Activated T-helper 2 cell treated with anti-CD3 and anti-CD28 coated beads, Interferon-gamma antibody, Interleukin-2, Interleukin-4, amounts not matched to agents 10 μg/mL and 5 μg/mL and 100 μg/mL, durations not matched to agents 14 hours and 24 hours and 36 hours (primary cell): ENCODE measurements at regions of chr5 and their contacts with region 1.

Region 1: GRCh38 chr5:94740286-94740685 is 121.8 kb downstream of the SLF1 start:
- DNase-seq: no peak
- H3K4me3 Mint-ChIP-seq: no peak overlapping the region
- H3K27ac Mint-ChIP-seq: no peak overlapping the region
- H3K4me1 Mint-ChIP-seq: no peaks in the 10 kb centered on the region
- H3K27me3 Mint-ChIP-seq: peaks cover 3% of the 10 kb centered on the region

Region 2: GRCh38 chr5:94508461-94509148 is 231.7 kb before region 1 on chr5:
- intact Hi-C with region 1: no loop called
- DNase-seq: no peak
- H3K4me3 Mint-ChIP-seq: no peak overlapping the region
- H3K27ac Mint-ChIP-seq: no peak overlapping the region
- H3K4me1 Mint-ChIP-seq: no peaks in the 10 kb centered on the region
- H3K27me3 Mint-ChIP-seq: peaks cover 3% of the 10 kb centered on the region

Region 3: DNA sequence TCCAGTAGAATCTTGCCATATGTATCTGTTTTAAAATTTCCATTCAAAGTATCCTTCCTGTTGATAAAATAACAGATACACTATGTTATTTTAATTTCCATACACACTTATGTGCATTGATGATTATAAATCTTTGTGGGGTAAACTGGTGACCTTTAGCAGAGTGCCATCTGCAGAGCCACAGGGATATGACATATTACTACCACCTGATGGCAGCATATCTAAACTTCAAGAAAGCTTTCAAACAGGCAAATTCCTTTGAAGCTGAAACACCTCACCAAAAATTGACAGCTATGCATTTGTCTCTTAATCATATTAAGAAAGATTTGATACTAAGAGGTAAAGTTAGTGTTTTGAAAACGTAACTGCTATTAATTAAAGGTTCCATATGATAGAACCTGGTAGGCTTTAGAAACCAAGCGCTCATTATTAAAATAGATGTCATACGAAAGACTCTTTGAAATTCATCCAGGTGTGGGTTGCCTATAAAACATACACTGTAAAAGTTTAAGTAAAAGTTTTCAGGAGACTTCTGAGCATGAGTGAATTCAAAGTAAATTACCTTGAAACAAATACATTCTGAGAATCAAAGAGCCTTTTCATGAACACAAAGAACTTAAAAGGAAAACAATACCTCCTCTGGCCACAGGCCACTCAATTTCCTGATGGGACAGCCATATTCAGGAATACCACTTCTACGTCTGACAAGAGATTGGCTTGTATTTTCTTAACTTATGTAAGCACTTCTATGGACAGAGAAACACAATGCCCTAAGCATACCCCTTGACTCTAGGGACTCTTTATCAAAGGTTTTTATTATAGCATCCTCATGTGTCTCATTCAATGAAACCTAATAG is 215.2 kb before region 1 on chr5:
- intact Hi-C with region 1: loop called (anchors 1 kb)
- DNase-seq: no peak
- H3K4me3 Mint-ChIP-seq: no peak overlapping the region
- H3K27ac Mint-ChIP-seq: no peak overlapping the region
- H3K4me1 Mint-ChIP-seq: no peaks in the 10 kb centered on the region
- H3K27me3 Mint-ChIP-seq: no peaks in the 10 kb centered on the region

Region 4: DNA sequence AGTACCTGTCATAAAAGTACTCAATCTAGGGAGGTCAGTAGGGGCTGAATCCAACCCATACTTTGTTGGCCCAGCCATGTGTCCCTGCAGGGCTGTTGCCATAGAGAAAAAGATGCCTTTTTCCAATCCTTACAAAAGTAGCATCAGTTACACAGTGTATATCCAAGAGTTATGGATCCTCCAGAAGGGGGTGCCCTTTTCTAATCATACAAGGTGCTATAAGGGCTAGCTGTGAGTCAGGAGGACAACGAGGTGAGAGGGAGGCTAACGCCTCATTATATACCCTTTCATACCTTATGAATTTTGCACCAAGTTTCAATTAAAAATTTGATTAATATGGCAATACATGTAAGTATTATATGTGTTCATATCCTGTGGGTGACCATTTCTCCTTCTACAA is 126.7 kb before region 1 on chr5:
- intact Hi-C with region 1: loop called (anchors 1 kb)
- DNase-seq: no peak
- H3K4me3 Mint-ChIP-seq: no peak overlapping the region
- H3K27ac Mint-ChIP-seq: no peak overlapping the region
- H3K4me1 Mint-ChIP-seq: peaks cover 16% of the 10 kb centered on the region
- H3K27me3 Mint-ChIP-seq: no peaks in the 10 kb centered on the region

Region 5: DNA sequence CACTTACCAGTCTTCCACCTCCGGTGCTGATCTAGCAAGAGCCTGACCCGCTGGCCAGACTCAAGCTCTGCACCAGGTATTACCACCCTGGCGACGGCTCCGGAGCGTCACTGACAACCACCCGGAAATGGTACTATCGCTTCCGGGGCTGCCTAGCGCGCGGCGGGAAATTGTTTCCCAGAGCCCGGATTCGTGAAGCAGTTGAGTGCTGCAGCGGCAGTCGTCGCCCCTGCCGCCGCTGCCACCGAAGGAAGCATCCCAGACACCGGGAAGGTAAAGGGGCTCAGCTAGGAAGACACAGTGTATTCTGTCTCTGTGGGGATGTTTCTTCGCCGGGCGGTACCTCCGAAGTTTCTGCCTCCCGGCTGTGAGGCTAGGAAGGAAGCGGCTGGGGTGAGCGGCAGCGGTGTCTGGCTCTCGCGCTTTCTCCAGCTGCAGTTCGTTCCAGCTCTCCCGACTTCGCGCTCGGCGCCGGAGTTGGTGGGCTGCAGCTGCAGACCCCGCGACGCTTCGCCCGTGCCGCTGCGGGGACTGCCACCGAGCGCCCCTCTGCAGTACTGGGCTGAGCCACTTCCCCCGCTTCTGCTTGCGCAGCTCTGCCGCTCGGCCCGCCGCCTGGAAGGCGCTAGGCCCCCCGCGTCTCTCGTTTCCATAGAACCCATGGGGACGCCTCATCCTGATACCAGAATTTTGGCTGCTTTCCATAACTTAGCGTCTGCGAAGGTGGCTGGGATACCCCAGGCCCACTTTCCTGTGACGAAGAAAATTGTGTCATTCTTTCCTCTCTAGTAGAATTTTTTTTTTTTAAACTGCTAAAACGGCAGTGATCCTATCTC is 121.6 kb before region 1 on chr5 and contains the starts of genes KIAA0825 and SLF1:
- intact Hi-C with region 1: loop called (anchors 1 kb)
- DNase-seq: peak; percentile 83
- H3K4me3 Mint-ChIP-seq: peak within 1 kb of the TSS; percentile 97
- H3K27ac Mint-ChIP-seq: peak within 1 kb of the TSS; percentile 96
- H3K4me1 Mint-ChIP-seq: peaks cover 37% of the 10 kb centered on the region
- H3K27me3 Mint-ChIP-seq: no peaks in the 10 kb centered on the region
- total RNA-seq, gene KIAA0825: 0.32 and 0.62 TPM in 2 replicates
- total RNA-seq, gene SLF1: 12.7 and 13.7 TPM in 2 replicates

Region 6: DNA sequence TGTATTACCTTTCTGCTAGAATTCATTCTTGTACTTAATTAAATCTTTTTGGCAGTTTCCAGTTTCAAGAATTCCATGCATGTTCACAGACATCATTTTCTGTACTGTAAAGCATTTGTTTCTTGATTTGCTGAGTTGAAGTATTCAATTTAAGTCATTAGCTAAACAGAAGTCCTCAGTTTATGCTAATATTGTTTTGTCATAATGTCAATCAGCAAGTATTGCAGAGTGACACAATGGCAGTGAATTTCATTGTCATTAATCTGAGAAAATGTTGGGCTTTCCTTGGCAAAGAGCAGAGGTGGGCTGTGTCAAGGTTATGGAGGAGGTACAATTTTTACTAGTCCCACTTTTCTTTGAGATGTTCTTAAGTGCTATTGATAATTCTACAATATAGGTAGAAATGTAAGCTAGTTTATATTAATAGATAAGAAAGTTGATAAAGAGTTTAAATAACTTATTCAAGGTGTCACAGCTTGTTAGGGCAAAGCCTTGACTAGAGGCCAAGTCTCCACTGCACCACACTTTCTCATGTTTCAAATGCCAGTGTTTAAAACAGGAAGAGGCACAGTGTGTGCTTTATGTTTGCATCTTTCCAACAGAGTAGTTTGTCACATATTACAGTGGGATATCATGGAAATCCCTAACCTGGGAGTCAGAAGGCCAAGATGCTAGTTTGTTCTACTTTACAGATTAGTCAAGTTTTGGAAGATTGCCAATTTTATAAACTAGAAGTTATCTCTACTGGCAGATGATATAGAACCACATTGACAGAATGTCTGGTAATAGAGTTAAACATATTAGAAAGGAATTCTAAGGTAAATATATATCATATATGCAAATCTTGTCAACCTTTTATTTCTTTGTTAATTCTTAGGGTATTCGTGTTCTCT is 65.5 kb before region 1 on chr5:
- intact Hi-C with region 1: no loop called
- DNase-seq: no peak
- H3K4me3 Mint-ChIP-seq: no peak overlapping the region
- H3K27ac Mint-ChIP-seq: no peak overlapping the region
- H3K4me1 Mint-ChIP-seq: no peaks in the 10 kb centered on the region
- H3K27me3 Mint-ChIP-seq: no peaks in the 10 kb centered on the region

Region 7: GRCh38 chr5:94802450-94802849 is 62.2 kb after region 1 on chr5:
- intact Hi-C with region 1: no loop called
- DNase-seq: no peak
- H3K4me3 Mint-ChIP-seq: no peak overlapping the region
- H3K27ac Mint-ChIP-seq: no peak overlapping the region
- H3K4me1 Mint-ChIP-seq: peaks cover 3% of the 10 kb centered on the region
- H3K27me3 Mint-ChIP-seq: peaks cover 33% of the 10 kb centered on the region

Region 8: DNA sequence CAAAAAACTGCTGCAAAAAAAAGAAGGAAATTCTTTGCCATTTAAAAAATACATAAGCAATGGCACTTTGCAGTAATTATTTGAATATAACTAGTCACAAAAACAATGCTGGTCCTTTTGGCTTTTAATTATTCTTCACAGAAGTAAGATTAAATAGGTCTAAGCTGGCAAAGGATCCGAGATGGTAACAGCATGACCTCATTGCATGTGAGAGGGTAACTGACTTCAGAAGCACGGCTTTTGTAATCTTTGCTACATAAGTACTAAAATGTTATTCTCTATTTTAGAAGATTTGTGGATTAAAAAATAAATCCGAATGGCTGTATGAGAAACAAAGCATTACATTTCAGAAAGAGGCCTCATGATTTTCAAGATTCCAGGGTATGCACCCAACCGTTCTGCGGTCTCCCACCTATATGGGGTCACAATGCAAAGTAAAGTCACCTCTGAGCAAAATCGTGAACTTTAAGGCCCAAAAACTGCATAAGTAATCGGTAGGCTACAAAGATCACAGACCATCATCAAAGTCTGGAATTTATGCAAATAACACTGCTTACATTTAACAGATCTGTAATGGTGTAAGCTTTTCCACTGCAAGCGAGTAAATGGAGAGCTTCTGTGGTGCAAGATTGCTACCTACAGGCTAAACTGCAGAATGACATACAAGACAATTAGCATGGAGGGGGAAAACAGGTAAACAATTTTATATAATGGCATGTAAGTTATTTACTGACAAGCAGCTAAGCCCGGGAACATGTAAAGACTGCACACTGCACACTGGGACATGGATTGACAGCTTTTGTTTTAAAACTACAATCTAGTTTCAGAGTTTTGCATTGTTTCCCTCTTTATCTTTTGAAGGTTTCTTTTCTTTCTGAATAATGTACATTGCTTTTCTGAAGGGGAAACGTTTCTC is 109.8 kb after region 1 on chr5:
- intact Hi-C with region 1: loop called (anchors 2 kb)
- DNase-seq: no peak
- H3K4me3 Mint-ChIP-seq: no peak overlapping the region
- H3K27ac Mint-ChIP-seq: no peak overlapping the region
- H3K4me1 Mint-ChIP-seq: peaks cover 2% of the 10 kb centered on the region
- H3K27me3 Mint-ChIP-seq: peaks cover 13% of the 10 kb centered on the region

Region 9: GRCh38 chr5:95296291-95296690 is 556.0 kb after region 1 on chr5:
- intact Hi-C with region 1: no loop called
- DNase-seq: no peak
- H3K4me3 Mint-ChIP-seq: no peak overlapping the region
- H3K27ac Mint-ChIP-seq: no peak overlapping the region
- H3K4me1 Mint-ChIP-seq: no peaks in the 10 kb centered on the region
- H3K27me3 Mint-ChIP-seq: peaks cover 7% of the 10 kb centered on the region